ENCODE measurements at regions of chr6 and their contacts with region 1.

Region 1: GRCh38 chr6:82040405-82041221 is 206.9 kb downstream of the IBTK start:
- DNase-seq: peak in 1 of 2 experiments; percentile 56
- H3K4me3 ChIP-seq: no peak overlapping the region
- H3K27ac ChIP-seq: no peak overlapping the region
- H3K4me1 ChIP-seq: no peaks in the 10 kb centered on the region
- H3K27me3 ChIP-seq: no peaks in the 10 kb centered on the region
- CTCF ChIP-seq: peak; percentile 19 to 77 (median 62)
- EP300 ChIP-seq: no peak
- POLR2A ChIP-seq: no peak
- RAD21 ChIP-seq: peak; percentile 74 to 77

Region 2: GRCh38 chr6:81818901-81819361 is 221.7 kb before region 1 on chr6:
- CTCF ChIA-PET with region 1: no interaction called
- POLR2A ChIA-PET with region 1: no interaction called
- DNase-seq: no peak
- H3K4me3 ChIP-seq: no peak overlapping the region
- H3K27ac ChIP-seq: no peak overlapping the region
- H3K4me1 ChIP-seq: no peaks in the 10 kb centered on the region
- H3K27me3 ChIP-seq: no peaks in the 10 kb centered on the region
- CTCF ChIP-seq: no peak
- EP300 ChIP-seq: no peak
- POLR2A ChIP-seq: no peak
- RAD21 ChIP-seq: no peak

Region 3: DNA sequence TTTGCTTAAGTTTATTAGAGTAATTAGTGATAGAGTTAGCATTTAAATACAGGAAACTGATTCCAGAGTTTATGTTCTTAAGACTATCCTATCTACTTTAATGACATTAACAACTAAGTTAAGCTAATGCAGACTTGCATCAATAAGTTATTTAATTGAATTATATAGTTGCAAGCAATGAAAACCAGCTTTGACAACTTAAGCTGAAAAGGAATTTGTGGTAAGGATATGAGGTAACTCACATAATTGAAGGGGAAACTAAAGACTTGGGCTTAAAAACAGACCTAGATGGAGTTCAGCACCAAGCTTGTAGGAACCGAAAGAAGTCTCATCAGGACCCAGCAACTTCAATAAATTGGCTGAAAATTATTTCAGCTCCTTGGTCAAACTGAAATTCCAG is 15.3 kb before region 1 on chr6:
- CTCF ChIA-PET with region 1: interaction called, 25 read pairs
- POLR2A ChIA-PET with region 1: no interaction called
- DNase-seq: no peak
- H3K4me3 ChIP-seq: no peak overlapping the region
- H3K27ac ChIP-seq: no peak overlapping the region
- H3K4me1 ChIP-seq: no peaks in the 10 kb centered on the region
- H3K27me3 ChIP-seq: no peaks in the 10 kb centered on the region
- CTCF ChIP-seq: no peak
- EP300 ChIP-seq: no peak
- POLR2A ChIP-seq: no peak
- RAD21 ChIP-seq: no peak

Region 4: GRCh38 chr6:82166493-82166892 is 125.9 kb after region 1 on chr6:
- CTCF ChIA-PET with region 1: no interaction called
- POLR2A ChIA-PET with region 1: no interaction called
- DNase-seq: no peak
- H3K4me3 ChIP-seq: no peak overlapping the region
- H3K27ac ChIP-seq: no peak overlapping the region
- H3K4me1 ChIP-seq: no peaks in the 10 kb centered on the region
- H3K27me3 ChIP-seq: no peaks in the 10 kb centered on the region
- CTCF ChIP-seq: no peak
- EP300 ChIP-seq: no peak
- POLR2A ChIP-seq: no peak
- RAD21 ChIP-seq: no peak

Region 5: DNA sequence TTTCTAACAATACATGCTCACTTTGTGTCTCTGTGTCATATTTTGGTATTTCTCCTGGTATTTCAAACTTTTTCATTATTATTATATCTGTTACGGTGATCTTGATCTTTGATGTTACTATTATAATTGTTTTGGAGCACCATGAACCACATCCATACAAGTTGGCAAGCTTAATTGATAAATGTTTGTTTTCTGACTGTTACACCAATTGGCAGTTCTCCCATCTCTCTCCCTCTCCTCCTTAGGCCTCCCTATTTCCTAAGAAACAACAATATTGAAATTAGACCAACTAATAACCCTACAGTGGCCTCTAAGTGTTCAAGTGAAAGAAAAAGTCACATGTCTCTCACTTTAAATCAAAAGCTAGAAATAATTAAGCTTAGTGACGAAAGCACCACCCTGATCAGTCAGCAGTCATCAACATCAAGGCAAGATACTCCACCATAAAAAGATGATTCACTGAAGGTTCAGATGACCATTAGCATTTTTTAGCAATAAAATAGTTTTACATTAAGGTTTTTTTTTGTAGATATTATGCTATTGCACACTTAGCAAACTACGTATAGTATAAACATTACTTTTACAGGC is 145.4 kb after region 1 on chr6:
- CTCF ChIA-PET with region 1: no interaction called
- POLR2A ChIA-PET with region 1: no interaction called
- DNase-seq: no peak
- H3K4me3 ChIP-seq: no peak overlapping the region
- H3K27ac ChIP-seq: no peak overlapping the region
- H3K4me1 ChIP-seq: no peaks in the 10 kb centered on the region
- H3K27me3 ChIP-seq: no peaks in the 10 kb centered on the region
- CTCF ChIP-seq: no peak
- EP300 ChIP-seq: no peak
- POLR2A ChIP-seq: no peak
- RAD21 ChIP-seq: no peak

Measured in H1 (cell line).